ENCODE measurements at regions of chr16 and their contacts with region 1.

Region 1: DNA sequence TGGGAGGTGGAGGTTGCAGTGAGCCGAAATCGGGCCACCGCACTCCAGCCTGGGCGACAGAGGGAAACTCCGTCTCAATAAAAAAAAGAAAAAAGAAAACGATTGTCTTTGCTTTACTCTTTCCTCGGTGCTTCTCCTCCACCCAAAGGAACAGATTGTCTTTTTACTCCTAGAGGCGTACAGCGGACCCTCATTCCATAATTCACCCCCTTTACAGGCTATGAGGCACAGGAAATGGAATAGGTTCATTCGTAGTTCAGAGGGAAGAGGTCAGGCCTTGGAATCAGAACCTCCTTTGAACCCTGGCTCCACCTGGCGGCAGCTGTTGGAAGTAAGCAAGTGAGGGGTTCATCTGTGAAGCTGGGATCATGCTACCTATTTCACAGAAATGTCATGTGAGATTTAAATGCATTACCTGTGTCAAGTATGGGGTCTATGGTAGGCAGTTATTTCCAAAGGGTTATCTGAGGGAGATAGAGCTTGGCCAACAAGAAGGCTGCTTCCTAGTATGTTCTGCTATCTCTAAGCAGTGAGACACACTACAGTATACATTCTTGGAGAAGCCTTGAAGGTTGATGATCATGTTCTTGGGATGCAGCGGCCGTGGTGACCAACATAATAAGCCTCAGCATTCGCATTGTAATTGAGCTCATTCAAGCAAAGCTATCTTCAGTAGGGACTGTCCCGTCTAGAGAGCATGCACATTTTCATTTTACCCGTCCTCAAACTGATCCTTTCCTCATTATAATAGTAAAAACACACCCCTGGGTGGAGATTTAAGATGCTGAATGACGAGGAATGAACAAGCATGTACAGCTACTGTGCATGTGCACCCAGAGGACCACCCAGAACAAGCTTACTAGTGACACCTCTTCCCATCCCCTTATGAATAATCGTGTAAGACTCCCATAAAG is 18.7 kb upstream of the ZNF689 start:
- DNase-seq: peak; percentile 90
- H3K4me3 Mint-ChIP-seq: peak overlapping the region; percentile 63
- H3K27ac Mint-ChIP-seq: peak overlapping the region; percentile 53
- H3K4me1 Mint-ChIP-seq: peaks cover 16% of the 10 kb centered on the region
- H3K27me3 Mint-ChIP-seq: peaks cover 2% of the 10 kb centered on the region

Region 2: GRCh38 chr16:30609926-30610839 is 18.7 kb before region 1 on chr16 and contains the start of gene ZNF689:
- CTCF ChIA-PET with region 1: interaction called, 57 read pairs
- POLR2A ChIA-PET with region 1: interaction called, 9 read pairs
- DNase-seq: peak; percentile 96
- H3K4me3 Mint-ChIP-seq: peak within 1 kb of the TSS; percentile 83
- H3K27ac Mint-ChIP-seq: peak within 1 kb of the TSS; percentile 90
- H3K4me1 Mint-ChIP-seq: peaks cover 29% of the 10 kb centered on the region
- H3K27me3 Mint-ChIP-seq: no peaks in the 10 kb centered on the region
- total RNA-seq, gene ZNF689: 9.9 to 11.7 TPM

Region 3: DNA sequence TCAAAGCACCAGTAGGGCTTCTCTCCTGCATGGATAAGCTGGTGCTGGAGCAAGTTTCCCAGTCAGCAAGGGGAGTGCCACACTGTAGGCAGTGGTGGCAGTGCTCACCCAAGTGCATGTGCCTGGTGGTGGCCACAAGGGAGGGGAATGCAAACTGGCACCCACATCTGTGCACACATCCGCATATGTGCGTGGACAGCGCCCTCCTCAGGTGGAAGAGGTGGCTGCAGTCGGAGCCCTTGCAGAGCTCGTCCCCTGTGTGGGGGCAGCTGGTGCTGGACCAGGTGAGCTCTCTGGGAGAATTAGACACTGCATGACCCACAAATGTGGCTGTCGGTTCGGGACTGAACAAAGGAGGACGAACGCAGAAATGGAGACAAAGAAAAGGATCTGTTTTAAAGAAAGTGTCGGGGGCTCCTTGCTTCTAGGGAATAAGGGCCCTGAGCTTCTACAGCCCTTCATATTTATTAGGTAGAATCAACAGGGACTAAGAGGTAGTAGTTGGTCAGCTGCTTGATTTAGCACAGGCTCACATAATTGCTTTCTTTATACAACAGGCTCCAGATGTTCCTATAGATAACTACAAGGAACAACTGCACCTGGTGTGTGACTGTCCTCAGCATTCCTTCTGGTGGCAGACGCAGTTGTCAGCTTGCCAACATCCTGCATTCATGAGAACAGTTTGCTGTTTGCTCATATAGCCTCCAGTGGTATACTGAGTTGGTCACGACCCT is 13.4 kb before region 1 on chr16:
- CTCF ChIA-PET with region 1: interaction called, 57 read pairs
- POLR2A ChIA-PET with region 1: interaction called, 9 read pairs
- DNase-seq: peak; percentile 85
- H3K4me3 Mint-ChIP-seq: no peak overlapping the region
- H3K27ac Mint-ChIP-seq: no peak overlapping the region
- H3K4me1 Mint-ChIP-seq: peaks cover 12% of the 10 kb centered on the region
- H3K27me3 Mint-ChIP-seq: peaks cover 17% of the 10 kb centered on the region